OCI-LY7 (cell line): ENCODE measurements at regions of chr1 and their contacts with region 1.

Region 1: GRCh38 chr1:224329842-224330753 is at the start of gene NVL:
- DNase-seq: peak; percentile 93
- H3K4me3 ChIP-seq: peak within 1 kb of the TSS; percentile 95
- H3K27ac ChIP-seq: peak within 1 kb of the TSS; percentile 82
- H3K4me1 ChIP-seq: peaks cover 35% of the 10 kb centered on the region
- CTCF ChIP-seq: no peak
- total RNA-seq, gene NVL: 31.6 and 33.9 TPM in 2 replicates

Region 2: DNA sequence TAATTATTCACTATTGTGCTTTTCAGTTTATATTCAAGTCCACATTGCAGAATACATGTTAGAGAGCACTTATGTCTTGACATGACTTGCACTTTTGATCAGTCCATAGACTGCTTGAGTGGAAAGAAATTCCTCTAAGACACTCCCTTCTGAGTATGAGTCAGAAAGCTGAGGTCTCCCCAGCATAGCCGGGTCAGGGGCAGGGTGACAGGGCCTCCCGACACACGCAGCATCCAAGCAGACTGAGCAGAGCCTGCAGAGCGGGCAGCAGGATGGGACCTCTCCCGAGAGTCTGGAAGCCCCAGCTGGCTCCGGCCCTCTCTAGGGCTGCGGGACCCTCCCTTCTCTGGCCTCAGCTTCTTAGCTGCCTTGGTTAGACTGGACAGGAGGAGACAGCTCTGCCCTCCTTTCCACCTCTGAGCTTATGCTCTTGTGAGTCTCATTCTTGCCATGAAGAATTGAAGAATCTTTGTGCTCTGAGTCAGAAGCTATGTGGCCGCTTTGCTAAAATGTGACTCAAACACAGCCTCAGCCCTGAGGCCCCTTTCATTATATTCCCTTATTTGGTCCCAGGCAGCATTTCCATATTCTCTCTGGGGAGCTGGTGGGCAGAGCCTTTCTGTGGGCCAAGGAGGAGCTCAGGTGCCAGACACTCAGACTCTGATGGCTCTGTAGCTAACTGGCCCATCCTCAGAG is 629.0 kb before region 1 on chr1:
- CTCF ChIA-PET with region 1: no interaction called
- POLR2A ChIA-PET with region 1: no interaction called
- intact Hi-C with region 1: loop called (anchors 1 kb)
- DNase-seq: no peak
- H3K4me3 ChIP-seq: no peak overlapping the region
- H3K27ac ChIP-seq: no peak overlapping the region
- H3K4me1 ChIP-seq: no peaks in the 10 kb centered on the region
- CTCF ChIP-seq: no peak

Region 3: GRCh38 chr1:223811634-223812415 is 518.3 kb before region 1 on chr1:
- CTCF ChIA-PET with region 1: no interaction called
- POLR2A ChIA-PET with region 1: no interaction called
- intact Hi-C with region 1: loop called (anchors 5 kb)
- DNase-seq: peak; percentile 26
- H3K4me3 ChIP-seq: no peak overlapping the region
- H3K27ac ChIP-seq: no peak overlapping the region
- H3K4me1 ChIP-seq: peaks cover 15% of the 10 kb centered on the region
- CTCF ChIP-seq: peak; percentile 78

Region 4: GRCh38 chr1:224052772-224053171 is 277.3 kb before region 1 on chr1:
- CTCF ChIA-PET with region 1: no interaction called
- POLR2A ChIA-PET with region 1: no interaction called
- intact Hi-C with region 1: loop called (anchors 2 kb)
- DNase-seq: no peak
- H3K4me3 ChIP-seq: no peak overlapping the region
- H3K27ac ChIP-seq: no peak overlapping the region
- H3K4me1 ChIP-seq: no peaks in the 10 kb centered on the region
- CTCF ChIP-seq: no peak

Region 5: DNA sequence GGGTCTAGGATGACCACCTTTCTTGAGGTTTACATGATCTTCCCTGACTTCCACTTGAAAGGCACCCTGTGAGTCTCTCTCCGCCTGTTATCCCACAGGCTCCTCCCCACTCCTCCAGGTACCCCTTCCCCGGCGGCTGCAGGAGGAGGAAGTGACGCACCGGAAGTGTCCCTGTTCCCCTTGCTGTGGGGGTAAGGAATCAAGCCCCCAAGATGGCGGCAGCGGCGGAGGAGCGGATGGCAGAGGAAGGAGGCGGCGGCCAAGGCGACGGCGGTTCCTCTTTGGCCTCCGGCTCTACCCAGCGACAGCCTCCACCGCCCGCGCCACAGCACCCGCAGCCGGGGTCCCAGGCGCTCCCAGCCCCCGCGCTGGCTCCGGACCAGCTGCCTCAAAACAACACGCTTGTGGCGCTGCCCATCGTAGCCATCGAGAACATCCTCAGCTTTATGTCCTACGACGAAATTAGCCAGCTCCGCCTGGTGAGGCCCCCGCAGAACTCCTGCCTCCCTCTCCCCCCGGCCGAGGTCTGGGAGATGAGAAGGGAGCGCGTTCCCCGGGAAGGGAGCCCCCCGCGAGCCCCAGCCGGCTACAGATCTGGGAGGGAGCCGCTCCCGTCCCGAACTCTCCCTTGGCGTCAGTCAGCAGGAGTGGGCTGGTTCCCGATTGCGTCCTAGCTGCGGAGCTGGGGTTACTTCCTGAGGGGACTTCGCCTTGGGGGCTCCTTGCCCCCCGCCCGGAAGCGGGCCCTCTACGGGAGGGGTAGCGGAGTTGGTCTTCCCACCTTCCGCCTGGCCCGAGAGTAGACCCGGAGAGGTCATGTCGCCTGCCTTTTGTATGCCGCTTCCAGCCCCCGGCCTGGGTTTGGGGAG is 215.9 kb before region 1 on chr1 and contains the start of gene FBXO28:
- CTCF ChIA-PET with region 1: no interaction called
- POLR2A ChIA-PET with region 1: interaction called, 5 read pairs
- intact Hi-C with region 1: loop called (anchors 1 kb)
- DNase-seq: peak; percentile 95
- H3K4me3 ChIP-seq: peak within 1 kb of the TSS; percentile 78
- H3K27ac ChIP-seq: peak within 1 kb of the TSS; percentile 74
- H3K4me1 ChIP-seq: peaks cover 25% of the 10 kb centered on the region
- CTCF ChIP-seq: no peak
- total RNA-seq, gene FBXO28: 23.3 and 25.1 TPM in 2 replicates

Region 6: GRCh38 chr1:224245188-224245587 is 84.9 kb before region 1 on chr1:
- CTCF ChIA-PET with region 1: no interaction called
- POLR2A ChIA-PET with region 1: interaction called, 3 read pairs
- intact Hi-C with region 1: loop called (anchors 1 kb)
- DNase-seq: peak; percentile 88
- H3K4me3 ChIP-seq: peak overlapping the region; percentile 1
- H3K27ac ChIP-seq: peak overlapping the region; percentile 85
- H3K4me1 ChIP-seq: peaks cover 22% of the 10 kb centered on the region
- CTCF ChIP-seq: peak; percentile 47

Region 7: DNA sequence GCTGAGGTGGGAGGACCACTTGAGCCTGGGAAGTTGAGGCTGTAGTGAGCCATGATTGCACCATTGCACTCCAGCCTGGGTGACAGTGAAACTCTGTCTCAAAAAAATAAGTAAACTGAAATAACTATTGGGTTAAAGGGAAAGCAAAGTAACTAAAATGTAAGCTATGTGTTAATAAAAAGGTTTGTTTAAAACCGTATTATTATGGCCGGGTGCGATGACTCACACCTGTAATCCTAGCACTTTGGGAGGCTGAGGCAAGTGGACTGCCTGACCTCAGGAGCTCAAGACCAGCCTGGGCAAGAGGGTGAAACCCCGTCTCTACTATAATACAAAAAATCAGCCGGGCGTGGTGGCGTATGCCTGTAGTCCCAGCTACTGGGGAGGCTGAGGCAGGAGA is 27.2 kb before region 1 on chr1:
- CTCF ChIA-PET with region 1: no interaction called
- POLR2A ChIA-PET with region 1: no interaction called
- intact Hi-C with region 1: no loop called
- DNase-seq: no peak
- H3K4me3 ChIP-seq: no peak overlapping the region
- H3K27ac ChIP-seq: no peak overlapping the region
- H3K4me1 ChIP-seq: no peaks in the 10 kb centered on the region
- CTCF ChIP-seq: no peak

Region 8: GRCh38 chr1:224356685-224357625 is 26.9 kb after region 1 on chr1 and contains the start of gene CNIH4:
- CTCF ChIA-PET with region 1: no interaction called
- POLR2A ChIA-PET with region 1: interaction called, 7 read pairs
- intact Hi-C with region 1: loop called (anchors 1 kb)
- DNase-seq: peak; percentile 97
- H3K4me3 ChIP-seq: peak within 1 kb of the TSS; percentile 77
- H3K27ac ChIP-seq: peak within 1 kb of the TSS; percentile 31
- H3K4me1 ChIP-seq: peaks cover 11% of the 10 kb centered on the region
- CTCF ChIP-seq: no peak
- total RNA-seq, gene CNIH4: 20.7 and 24.1 TPM in 2 replicates

Region 9: DNA sequence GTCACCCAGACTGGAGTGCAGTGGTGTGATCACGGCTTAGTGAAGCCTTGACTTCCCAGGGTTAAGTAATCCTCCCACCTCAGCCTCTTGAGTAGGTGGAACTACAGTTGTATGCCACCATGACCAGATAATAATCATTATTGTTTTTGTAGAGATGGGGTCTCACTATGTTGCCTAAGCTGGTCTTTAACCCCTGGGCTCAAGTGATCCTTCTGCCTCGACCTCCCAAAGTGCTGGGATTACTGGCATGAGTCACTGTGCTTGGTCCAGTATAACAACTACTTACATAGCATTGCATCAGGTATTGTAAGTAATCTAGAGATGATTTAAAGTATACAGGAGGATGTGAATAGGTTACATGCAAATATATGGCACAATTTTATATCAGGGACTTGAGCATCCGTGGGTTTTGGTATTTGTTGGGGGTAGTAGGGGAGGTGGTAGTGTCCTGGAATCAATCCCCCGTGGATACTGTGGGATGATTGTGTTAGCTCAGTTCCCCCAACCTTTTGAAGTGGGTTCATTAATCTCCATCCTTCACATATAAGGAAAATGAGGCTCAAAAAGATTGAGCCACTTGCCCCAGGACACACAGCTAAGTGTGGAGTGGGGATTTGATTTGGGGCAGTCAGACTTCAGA is 224.6 kb after region 1 on chr1:
- CTCF ChIA-PET with region 1: no interaction called
- POLR2A ChIA-PET with region 1: no interaction called
- intact Hi-C with region 1: no loop called
- DNase-seq: no peak
- H3K4me3 ChIP-seq: no peak overlapping the region
- H3K27ac ChIP-seq: no peak overlapping the region
- H3K4me1 ChIP-seq: no peaks in the 10 kb centered on the region
- CTCF ChIP-seq: no peak